ENCODE measurements at regions of chr13 and their contacts with region 1.

Region 1: DNA sequence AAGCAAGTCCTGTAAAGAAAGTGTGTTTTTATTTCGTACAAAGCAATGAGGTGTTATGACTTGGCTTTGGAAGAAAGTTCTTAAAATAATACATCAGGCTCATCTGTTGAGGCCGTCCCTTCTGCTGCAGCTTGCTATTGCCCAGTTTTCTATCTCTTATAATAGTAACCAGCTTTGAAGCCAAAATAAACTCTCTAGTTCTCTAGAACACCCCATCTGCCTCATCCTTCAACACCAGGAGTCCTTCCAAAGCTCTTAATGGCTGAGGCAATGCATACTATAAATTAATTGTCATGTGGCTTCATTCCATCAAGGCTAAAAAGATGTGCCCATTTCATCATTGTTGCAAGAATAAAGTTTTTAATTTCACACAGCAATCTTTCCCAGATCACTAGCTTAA is 49.4 kb upstream of the IPO5 start:
- DNase-seq: no peak
- ATAC-seq: no peak
- H3K4me3 ChIP-seq: no peak overlapping the region
- H3K27ac ChIP-seq: no peak overlapping the region
- H3K4me1 ChIP-seq: no peaks in the 10 kb centered on the region
- H3K27me3 ChIP-seq: no peaks in the 10 kb centered on the region
- CTCF ChIP-seq: no peak

Region 2: DNA sequence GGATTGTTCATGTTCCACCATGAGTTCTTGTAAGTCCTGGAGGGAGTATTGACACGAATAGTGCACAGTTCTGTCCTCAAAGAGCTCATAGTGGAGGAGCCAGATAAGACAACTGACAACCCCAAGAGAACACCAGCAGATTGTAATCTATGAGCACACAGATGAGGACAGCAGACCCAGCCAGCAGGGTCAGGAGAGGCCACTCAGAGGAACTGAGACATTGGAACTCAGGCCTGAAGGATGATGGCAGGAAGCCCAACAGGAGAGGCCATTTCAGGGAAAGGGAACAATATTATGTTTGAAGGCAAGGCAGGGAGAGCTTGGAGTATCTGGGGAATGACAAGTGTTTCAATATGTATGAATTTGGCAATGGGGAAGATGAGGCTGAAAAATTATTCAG is 14.3 kb before region 1 on chr13:
- CTCF ChIA-PET with region 1: no interaction called
- POLR2A ChIA-PET with region 1: interaction called, 14 read pairs
- intact Hi-C with region 1: no loop called
- DNase-seq: no peak
- ATAC-seq: no peak
- H3K4me3 ChIP-seq: no peak overlapping the region
- H3K27ac ChIP-seq: no peak overlapping the region
- H3K4me1 ChIP-seq: no peaks in the 10 kb centered on the region
- H3K27me3 ChIP-seq: no peaks in the 10 kb centered on the region
- CTCF ChIP-seq: no peak

Measured in PC-3 (cell line).